ENCODE measurements at regions of chr19 and their contacts with region 1.

Region 1: GRCh38 chr19:43619262-43620060 is at the start of gene ZNF428:
- DNase-seq: peak; percentile 91 to 95
- H3K4me3 ChIP-seq: peak within 1 kb of the TSS; percentile 90
- H3K4me3 Mint-ChIP-seq: peak within 1 kb of the TSS; percentile 96
- H3K27ac Mint-ChIP-seq: peak within 1 kb of the TSS; percentile 100
- H3K4me1 ChIP-seq: peaks cover 4% of the 10 kb centered on the region; the same call in 1 of the 2 replicates
- H3K4me1 Mint-ChIP-seq: peaks cover 8% of the 10 kb centered on the region
- H3K27me3 ChIP-seq: no peaks in the 10 kb centered on the region
- H3K27me3 Mint-ChIP-seq: no peaks in the 10 kb centered on the region
- CTCF ChIP-seq: no peak
- total RNA-seq, gene ZNF428: 38.9 and 39.5 TPM in 2 replicates

Region 2: DNA sequence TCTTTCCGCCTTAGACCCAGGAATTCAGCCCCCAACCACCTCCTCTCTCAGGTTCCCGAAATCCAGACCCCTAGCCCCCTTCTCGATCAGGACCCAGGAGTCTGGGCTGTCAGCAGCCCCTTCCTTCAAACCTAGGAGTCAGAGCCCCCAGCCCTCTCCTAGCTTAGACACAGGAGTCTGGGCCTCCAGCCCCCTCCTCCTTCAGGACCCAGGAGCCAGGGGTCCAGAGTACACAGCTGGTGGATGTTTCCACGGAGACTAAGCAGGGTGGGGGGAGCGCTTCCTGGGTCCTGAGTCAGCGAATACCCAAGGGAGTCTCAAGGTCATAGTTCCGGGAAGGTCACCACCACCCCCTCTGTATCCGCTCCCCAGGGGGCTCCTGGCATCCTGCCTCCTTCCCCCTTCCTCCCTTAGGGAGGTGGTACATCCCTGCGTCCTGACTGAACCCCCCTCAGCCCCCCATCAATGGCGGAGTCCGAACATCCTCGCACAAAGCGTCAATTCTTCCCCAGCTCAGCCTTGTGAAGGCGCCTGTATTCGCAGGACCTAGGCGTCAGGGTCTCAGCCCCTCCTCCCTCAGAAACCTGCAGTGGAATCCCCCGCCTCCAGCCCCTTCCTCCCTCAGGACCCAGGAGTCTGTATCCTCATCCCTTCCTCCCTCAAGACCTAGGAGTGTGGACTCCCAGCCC is 15.6 kb after region 1 on chr19:
- CTCF ChIA-PET with region 1: no interaction called
- POLR2A ChIA-PET with region 1: no interaction called
- intact Hi-C with region 1: loop called (anchors 2 kb)
- DNase-seq: no peak
- H3K4me3 ChIP-seq: no peak overlapping the region
- H3K4me3 Mint-ChIP-seq: no peak overlapping the region
- H3K27ac Mint-ChIP-seq: no peak overlapping the region
- H3K4me1 ChIP-seq: peaks cover 14% of the 10 kb centered on the region; the same call in 1 of the 2 replicates
- H3K4me1 Mint-ChIP-seq: peaks cover 19% of the 10 kb centered on the region
- H3K27me3 ChIP-seq: no peaks in the 10 kb centered on the region; the same call in 1 of the 2 replicates
- H3K27me3 Mint-ChIP-seq: peaks cover 7% of the 10 kb centered on the region
- CTCF ChIP-seq: no peak

Region 3: DNA sequence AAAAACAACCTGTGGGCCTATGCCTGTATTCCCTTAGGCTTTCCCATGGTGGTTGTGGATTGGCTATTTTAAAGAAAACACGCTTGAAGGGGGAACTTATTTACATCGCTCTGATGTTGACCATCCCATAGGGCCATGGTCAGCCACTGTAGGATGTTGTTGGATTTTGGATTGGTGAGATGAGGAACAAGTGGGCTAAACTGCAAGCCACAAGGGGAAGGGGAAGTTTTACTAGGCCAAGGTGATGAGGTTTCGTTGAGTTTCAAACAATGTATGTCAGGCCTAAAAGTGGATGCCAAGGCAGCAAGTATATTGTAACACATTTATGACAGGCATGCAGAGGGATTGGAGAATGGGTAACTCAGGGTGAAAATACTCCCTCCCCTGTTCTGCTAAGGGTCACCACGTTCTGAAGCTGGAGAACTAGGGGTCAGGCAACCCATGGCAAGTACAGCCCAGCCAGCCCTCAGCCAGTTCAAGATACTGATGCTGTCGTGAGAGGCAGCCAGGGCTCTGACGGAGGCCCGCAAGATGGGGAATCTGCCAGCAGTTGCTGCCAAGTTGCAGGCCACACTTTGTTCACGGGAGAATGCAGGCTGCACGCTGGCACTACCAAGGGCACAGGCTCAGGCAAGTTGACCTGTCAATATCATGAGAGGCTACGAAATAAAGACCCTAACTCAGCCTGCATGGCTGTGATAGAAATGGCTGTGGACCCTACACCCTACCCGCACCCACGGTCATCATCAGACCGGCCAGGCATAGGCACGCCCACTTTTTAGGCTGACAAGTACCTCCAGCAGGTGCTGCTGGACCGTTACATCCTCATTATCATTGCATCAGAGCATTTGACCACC is 107.5 kb after region 1 on chr19:
- CTCF ChIA-PET with region 1: no interaction called
- POLR2A ChIA-PET with region 1: no interaction called
- intact Hi-C with region 1: no loop called
- DNase-seq: no peak
- H3K4me3 ChIP-seq: no peak overlapping the region
- H3K4me3 Mint-ChIP-seq: no peak overlapping the region
- H3K27ac Mint-ChIP-seq: no peak overlapping the region
- H3K4me1 ChIP-seq: no peaks in the 10 kb centered on the region
- H3K4me1 Mint-ChIP-seq: no peaks in the 10 kb centered on the region
- H3K27me3 ChIP-seq: no peaks in the 10 kb centered on the region
- H3K27me3 Mint-ChIP-seq: no peaks in the 10 kb centered on the region
- CTCF ChIP-seq: no peak

Measured in Caco-2 (cell line).